ENCODE measurements at regions of chr12 and their contacts with region 1.

Region 1: GRCh38 chr12:13211859-13212664 is 15.5 kb downstream of the EMP1 start:
- DNase-seq: no peak
- H3K4me3 ChIP-seq: no peak overlapping the region
- CTCF ChIP-seq: peak; percentile 70

Region 2: GRCh38 chr12:12992418-12993130 is 219.5 kb before region 1 on chr12:
- CTCF ChIA-PET with region 1: interaction called, 88 read pairs
- POLR2A ChIA-PET with region 1: interaction called, 3 read pairs
- DNase-seq: peak; percentile 90
- H3K4me3 ChIP-seq: peak overlapping the region; percentile 34
- CTCF ChIP-seq: no peak

Region 3: DNA sequence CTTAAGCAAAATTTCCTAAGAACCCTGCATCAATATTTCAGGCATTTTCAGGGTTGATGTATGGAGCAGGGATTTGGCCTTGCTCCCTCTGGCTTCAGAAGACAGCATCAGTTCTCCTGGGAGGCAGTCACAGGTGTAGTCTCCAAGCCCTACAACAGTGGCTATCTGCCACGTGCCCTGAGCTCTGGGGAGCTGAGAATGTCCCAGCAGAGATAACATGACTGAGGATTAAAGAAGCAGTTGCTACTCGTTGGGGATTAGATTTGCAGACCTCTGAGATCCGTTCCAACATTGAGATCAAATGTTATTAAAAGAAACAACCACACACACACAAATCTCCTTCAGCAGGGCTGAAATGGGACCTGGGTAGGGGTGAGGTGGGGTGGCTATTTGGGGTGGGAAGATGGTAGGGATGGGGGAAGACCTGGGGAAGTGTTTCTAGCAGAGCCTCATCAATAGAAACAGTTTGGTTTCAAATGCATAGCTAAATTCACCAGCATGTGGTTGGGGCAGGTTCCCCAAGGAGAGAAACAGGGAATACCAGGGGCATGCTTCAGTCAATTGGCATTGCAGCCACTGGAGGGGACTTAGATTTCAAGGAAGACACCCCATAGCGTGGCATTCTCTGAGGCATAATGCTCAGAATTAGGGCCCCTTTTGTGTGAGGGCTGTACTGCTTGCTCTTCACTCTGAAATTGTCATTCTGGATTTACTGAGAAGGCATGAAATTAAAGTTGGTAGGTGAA is 183.1 kb before region 1 on chr12:
- CTCF ChIA-PET with region 1: interaction called, 40 read pairs
- POLR2A ChIA-PET with region 1: no interaction called
- DNase-seq: no peak
- H3K4me3 ChIP-seq: no peak overlapping the region
- CTCF ChIP-seq: no peak

Region 4: DNA sequence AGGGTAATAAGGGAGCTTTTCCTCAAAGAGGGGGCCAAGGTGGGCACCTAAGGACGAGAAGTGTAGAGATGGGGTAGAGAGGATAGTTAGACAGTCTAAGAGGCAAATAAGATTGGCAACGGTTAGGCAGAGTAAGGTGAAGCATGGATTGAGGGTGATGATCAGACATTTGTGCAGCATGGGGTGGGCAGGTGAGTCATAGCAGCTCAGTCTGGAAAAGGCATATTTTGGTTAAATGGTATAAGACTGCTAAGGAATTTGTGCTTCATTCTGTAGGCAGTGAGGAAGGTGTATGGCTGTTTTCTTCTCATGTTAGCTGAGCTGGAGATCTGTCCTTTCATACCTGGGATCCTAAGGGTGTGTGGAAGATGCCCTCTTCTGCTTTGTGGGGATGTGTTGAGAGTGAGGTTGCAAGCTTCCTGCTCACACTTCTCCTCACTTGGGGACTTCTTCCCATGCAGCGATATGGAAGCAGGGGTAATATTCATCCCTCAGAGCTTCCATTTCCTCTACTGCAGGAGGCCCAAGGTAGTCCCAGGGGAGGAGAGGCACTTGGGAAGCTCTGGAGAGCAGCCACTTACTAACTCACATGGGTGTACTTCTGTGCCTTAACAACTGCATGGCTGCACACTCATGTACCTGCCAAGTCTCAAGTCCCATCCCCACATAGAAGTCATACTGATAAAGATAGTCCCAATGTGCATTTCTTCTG is 137.5 kb before region 1 on chr12:
- CTCF ChIA-PET with region 1: interaction called, 19 read pairs
- POLR2A ChIA-PET with region 1: no interaction called
- DNase-seq: no peak
- H3K4me3 ChIP-seq: no peak overlapping the region
- CTCF ChIP-seq: no peak

Region 5: DNA sequence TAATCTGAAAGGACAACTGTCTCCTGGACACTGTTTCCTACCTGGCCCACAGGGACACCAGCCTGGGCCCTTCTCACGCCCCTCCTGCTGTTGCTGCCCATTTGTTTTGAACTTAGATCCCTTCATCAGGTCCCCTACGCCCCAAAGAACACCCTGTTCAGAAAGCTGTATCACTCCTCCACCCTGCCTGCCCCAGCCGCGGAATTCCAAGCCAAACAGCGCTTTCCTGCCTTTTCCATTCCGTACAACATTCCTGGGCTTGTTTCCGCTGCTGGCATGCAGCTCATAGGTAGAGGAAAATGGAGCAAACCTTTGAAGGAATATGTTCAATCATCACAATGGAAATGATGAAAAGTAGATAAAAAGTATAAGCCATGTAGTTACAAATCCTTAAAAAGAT is 95.8 kb before region 1 on chr12:
- CTCF ChIA-PET with region 1: interaction called, 11 read pairs
- POLR2A ChIA-PET with region 1: no interaction called
- DNase-seq: no peak
- H3K4me3 ChIP-seq: no peak overlapping the region
- CTCF ChIP-seq: no peak

Region 6: DNA sequence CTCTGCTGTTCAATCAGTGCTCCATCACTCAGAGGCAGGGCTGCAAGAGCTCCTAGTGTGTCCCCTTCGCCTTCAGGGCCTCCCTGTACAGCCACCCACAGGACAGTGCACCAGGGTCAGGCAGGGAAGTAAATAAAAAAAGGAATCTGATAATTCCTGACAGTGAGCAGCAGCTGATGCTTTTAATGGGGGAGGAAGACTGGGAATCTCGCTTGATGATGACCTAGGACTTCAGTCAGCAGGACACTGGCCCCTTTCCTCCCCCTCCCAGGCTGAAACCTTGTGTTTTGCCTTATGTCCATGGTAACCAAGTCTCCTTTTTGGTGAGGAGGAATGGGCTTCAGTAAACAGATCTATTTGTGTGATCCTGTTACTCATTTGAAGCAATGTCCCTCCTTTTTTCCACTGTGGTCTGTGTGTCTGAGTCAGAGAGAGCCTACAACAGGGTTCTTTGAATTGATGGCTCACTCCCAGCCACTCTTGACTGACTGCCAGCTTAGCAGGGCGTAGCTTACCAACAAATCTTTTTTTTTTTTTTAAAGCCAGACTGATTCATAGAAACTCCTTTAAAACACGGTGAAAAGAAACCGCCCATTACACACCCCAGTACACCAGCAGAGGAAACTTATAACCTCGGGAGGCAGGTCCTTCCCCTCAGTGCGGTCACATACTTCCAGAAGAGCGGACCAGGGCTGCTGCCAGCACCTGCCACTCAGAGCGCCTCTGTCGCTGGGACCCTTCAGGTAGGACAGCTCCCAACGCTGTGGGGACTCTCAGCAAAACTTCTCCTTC is 15.7 kb before region 1 on chr12 and contains the start of gene EMP1:
- CTCF ChIA-PET with region 1: interaction called, 56 read pairs
- POLR2A ChIA-PET with region 1: interaction called, 12 read pairs
- DNase-seq: peak; percentile 97
- H3K4me3 ChIP-seq: peak within 1 kb of the TSS; percentile 89
- CTCF ChIP-seq: no peak